T-cell (primary cell): ENCODE measurements at regions of chr9 and their contacts with region 1.

Region 1: GRCh38 chr9:89442981-89443814 is 54.7 kb downstream of the SEMA4D start:
- DNase-seq: no peak
- ATAC-seq: no peak
- H3K4me3 ChIP-seq: no peak overlapping the region
- H3K4me3 Mint-ChIP-seq: peak overlapping the region in 1 of 3 donors; percentile 72
- H3K27ac ChIP-seq: peak overlapping the region; percentile 70
- H3K27ac Mint-ChIP-seq: peak overlapping the region; percentile 92 to 95
- H3K4me1 ChIP-seq: peaks cover 31 to 93% of the 10 kb centered on the region in 2 experiments
- H3K4me1 Mint-ChIP-seq: peaks cover 71 to 94% (median 93%) of the 10 kb centered on the region in 3 donors
- H3K27me3 ChIP-seq: no peaks in the 10 kb centered on the region
- H3K27me3 Mint-ChIP-seq: no peaks in the 10 kb centered on the region

Region 2: GRCh38 chr9:89542401-89543021 is 99.3 kb after region 1 on chr9:
- CTCF ChIA-PET with region 1: interaction called in 1 of 2 experiments, 8 read pairs
- POLR2A ChIA-PET with region 1: interaction called in 1 of 2 experiments, 12 read pairs
- DNase-seq: no peak
- ATAC-seq: no peak
- H3K4me3 ChIP-seq: no peak overlapping the region
- H3K4me3 Mint-ChIP-seq: peak overlapping the region in 1 of 3 donors; percentile 19
- H3K27ac ChIP-seq: no peak overlapping the region
- H3K27ac Mint-ChIP-seq: peak overlapping the region; percentile 66 to 73
- H3K4me1 ChIP-seq: peaks cover 23 to 58% of the 10 kb centered on the region in 2 experiments
- H3K4me1 Mint-ChIP-seq: peaks cover 66 to 80% (median 73%) of the 10 kb centered on the region in 3 donors
- H3K27me3 ChIP-seq: no peaks in the 10 kb centered on the region
- H3K27me3 Mint-ChIP-seq: no peaks in the 10 kb centered on the region